GM12878 (cell line): ENCODE measurements at regions of chr10 and their contacts with region 1.

Region 1: GRCh38 chr10:119313644-119314043 is 106.3 kb downstream of the GRK5 start:
- DNase-seq: peak; percentile 78
- ATAC-seq: peak; percentile 81
- H3K4me3 ChIP-seq: no peak overlapping the region
- H3K27ac ChIP-seq: no peak overlapping the region
- H3K4me1 ChIP-seq: peaks cover 69% of the 10 kb centered on the region
- H3K27me3 ChIP-seq: no peaks in the 10 kb centered on the region
- CTCF ChIP-seq: no peak
- EP300 ChIP-seq: peak; percentile 38 to 54; a peak in 1 of 4 replicates
- POLR2A ChIP-seq: no peak
- RAD21 ChIP-seq: no peak

Region 2: GRCh38 chr10:119254335-119254734 is 59.3 kb before region 1 on chr10:
- CTCF ChIA-PET with region 1: no interaction called
- POLR2A ChIA-PET with region 1: no interaction called
- RAD21 ChIA-PET with region 1: no interaction called
- SMC1A ChIA-PET with region 1: no interaction called
- in situ Hi-C with region 1: no loop called
- intact Hi-C with region 1: no loop called
- DNase-seq: no peak
- ATAC-seq: no peak
- H3K4me3 ChIP-seq: no peak overlapping the region
- H3K27ac ChIP-seq: no peak overlapping the region
- H3K4me1 ChIP-seq: no peaks in the 10 kb centered on the region
- H3K27me3 ChIP-seq: no peaks in the 10 kb centered on the region
- CTCF ChIP-seq: no peak
- EP300 ChIP-seq: no peak
- POLR2A ChIP-seq: no peak
- RAD21 ChIP-seq: no peak

Region 3: DNA sequence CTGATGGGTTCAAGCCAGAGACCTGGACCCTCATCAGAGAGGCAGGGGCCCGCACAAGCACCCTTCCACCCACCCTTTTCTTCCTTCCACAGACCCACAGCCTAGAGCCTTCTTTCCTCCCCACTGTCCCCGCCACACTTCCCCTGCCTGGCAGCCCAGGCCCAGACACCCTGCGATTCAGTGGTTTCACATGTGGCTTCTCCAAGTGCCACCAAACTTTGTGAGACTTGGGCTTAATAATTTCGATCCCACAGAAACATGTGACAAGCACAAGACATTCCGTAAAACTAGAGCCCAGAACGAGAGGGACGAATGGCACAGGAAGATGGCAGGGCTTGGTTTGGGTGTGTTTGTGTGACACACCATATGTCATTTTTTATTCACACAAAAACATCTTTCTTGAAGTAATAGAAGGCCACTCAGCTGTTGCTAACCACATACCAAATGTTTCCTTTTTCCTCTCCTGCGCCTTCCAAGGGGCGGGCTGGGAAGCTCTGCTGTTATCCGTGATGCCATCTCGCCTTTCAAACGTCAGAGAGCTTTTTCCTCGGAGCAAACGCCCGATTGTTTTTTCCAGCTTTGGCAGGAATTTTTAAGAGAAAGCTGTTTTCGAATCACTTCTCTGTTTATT is 56.6 kb after region 1 on chr10:
- CTCF ChIA-PET with region 1: interaction called, 4 read pairs
- POLR2A ChIA-PET with region 1: no interaction called
- RAD21 ChIA-PET with region 1: interaction called, 6 read pairs
- SMC1A ChIA-PET with region 1: no interaction called
- in situ Hi-C with region 1: no loop called
- intact Hi-C with region 1: loop called (anchors 5 kb)
- DNase-seq: no peak
- ATAC-seq: peak; percentile 31
- H3K4me3 ChIP-seq: no peak overlapping the region
- H3K27ac ChIP-seq: peak overlapping the region; percentile 72
- H3K4me1 ChIP-seq: peaks cover 60% of the 10 kb centered on the region
- H3K27me3 ChIP-seq: no peaks in the 10 kb centered on the region
- CTCF ChIP-seq: no peak
- EP300 ChIP-seq: no peak
- POLR2A ChIP-seq: no peak
- RAD21 ChIP-seq: no peak